Activated naive CD4-positive, alpha-beta T cell treated with anti-CD3 and anti-CD28 coated beads for 36 hours (primary cell): ENCODE measurements at regions of chr17 and their contacts with region 1.

Region 1: DNA sequence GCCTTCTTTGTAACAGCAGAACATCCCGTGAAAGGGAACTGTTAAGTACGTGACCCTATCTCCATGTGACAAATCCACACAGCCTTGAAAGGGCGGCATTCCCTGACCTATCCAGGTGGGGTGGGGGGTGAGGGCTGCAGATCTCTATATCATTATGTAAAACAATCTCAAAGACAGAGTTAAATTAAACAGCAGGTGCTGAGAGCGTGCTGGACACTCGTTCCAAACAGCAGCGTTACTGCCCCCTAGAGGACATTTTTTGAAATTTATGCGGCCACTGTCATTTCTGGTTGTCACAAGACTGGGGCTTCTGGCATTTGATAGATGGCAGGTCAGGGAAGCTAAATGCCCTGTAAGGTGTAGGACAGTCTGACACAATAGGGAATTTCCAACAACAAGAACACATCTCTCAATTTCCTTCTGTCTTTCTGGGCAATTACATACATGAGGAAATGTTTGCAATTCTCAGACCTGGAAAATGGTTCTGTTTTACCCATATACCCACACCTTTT is 6.7 kb upstream of the SLC25A39 start:
- DNase-seq: peak; percentile 87
- H3K4me3 Mint-ChIP-seq: no peak overlapping the region
- H3K27ac Mint-ChIP-seq: no peak overlapping the region
- H3K4me1 Mint-ChIP-seq: peaks cover 14% of the 10 kb centered on the region
- H3K27me3 Mint-ChIP-seq: no peaks in the 10 kb centered on the region

Region 2: GRCh38 chr17:44199553-44200477 is 131.5 kb before region 1 on chr17 and contains the start of gene ATXN7L3:
- CTCF ChIA-PET with region 1: interaction called, 10 read pairs
- intact Hi-C with region 1: loop called (anchors 1 kb)
- DNase-seq: peak; percentile 100
- H3K4me3 Mint-ChIP-seq: peak within 1 kb of the TSS; percentile 86
- H3K27ac Mint-ChIP-seq: peak within 1 kb of the TSS; percentile 91
- H3K4me1 Mint-ChIP-seq: peaks cover 36% of the 10 kb centered on the region
- H3K27me3 Mint-ChIP-seq: no peaks in the 10 kb centered on the region
- total RNA-seq, gene ATXN7L3: 53.3 to 53.9 TPM

Region 3: DNA sequence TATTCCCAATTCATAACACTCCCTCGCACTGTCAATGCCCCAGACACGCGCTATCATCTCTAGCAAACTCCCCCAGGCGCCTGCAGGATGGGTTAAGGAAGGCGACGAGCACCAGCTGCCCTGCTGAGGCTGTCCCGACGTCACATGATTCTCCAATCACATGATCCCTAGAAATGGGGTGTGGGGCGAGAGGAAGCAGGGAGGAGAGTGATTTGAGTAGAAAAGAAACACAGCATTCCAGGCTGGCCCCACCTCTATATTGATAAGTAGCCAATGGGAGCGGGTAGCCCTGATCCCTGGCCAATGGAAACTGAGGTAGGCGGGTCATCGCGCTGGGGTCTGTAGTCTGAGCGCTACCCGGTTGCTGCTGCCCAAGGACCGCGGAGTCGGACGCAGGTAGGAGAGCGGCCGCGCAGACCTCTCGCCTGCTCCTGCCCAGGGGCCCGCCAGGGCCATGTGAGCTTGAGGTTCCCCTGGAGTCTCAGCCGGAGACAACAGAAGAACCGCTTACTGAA is 13.7 kb after region 1 on chr17 and contains the start of gene GRN:
- CTCF ChIA-PET with region 1: interaction called, 10 read pairs
- intact Hi-C with region 1: loop called (anchors 1 kb)
- DNase-seq: peak; percentile 93
- H3K4me3 Mint-ChIP-seq: peak within 1 kb of the TSS; percentile 73
- H3K27ac Mint-ChIP-seq: peak within 1 kb of the TSS; percentile 43
- H3K4me1 Mint-ChIP-seq: peaks cover 10% of the 10 kb centered on the region
- H3K27me3 Mint-ChIP-seq: no peaks in the 10 kb centered on the region
- total RNA-seq, gene GRN: 47.1 to 50.5 TPM

Region 4: DNA sequence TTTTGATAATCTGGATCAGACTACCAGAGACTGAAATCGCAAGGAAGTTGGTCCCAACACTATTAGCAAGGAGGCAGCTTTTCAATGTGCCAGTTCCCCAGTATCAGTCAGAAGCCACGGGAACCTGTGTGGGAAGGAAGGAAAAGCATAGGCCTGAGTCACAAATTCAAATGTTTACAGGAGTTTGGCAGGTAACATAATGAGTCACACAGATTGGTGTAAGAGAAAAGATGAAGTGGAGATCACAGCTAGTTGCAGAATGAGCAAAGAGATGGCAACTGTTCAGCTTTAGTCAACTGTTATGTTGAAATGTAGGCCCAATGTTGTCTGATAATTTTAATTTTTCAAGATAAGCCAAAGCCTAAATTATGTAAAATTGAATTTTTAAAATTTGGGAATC is 86.2 kb after region 1 on chr17:
- CTCF ChIA-PET with region 1: no interaction called
- intact Hi-C with region 1: no loop called
- DNase-seq: peak; percentile 47
- H3K4me3 Mint-ChIP-seq: no peak overlapping the region
- H3K27ac Mint-ChIP-seq: peak overlapping the region; percentile 27
- H3K4me1 Mint-ChIP-seq: peaks cover 11% of the 10 kb centered on the region
- H3K27me3 Mint-ChIP-seq: no peaks in the 10 kb centered on the region

Region 5: DNA sequence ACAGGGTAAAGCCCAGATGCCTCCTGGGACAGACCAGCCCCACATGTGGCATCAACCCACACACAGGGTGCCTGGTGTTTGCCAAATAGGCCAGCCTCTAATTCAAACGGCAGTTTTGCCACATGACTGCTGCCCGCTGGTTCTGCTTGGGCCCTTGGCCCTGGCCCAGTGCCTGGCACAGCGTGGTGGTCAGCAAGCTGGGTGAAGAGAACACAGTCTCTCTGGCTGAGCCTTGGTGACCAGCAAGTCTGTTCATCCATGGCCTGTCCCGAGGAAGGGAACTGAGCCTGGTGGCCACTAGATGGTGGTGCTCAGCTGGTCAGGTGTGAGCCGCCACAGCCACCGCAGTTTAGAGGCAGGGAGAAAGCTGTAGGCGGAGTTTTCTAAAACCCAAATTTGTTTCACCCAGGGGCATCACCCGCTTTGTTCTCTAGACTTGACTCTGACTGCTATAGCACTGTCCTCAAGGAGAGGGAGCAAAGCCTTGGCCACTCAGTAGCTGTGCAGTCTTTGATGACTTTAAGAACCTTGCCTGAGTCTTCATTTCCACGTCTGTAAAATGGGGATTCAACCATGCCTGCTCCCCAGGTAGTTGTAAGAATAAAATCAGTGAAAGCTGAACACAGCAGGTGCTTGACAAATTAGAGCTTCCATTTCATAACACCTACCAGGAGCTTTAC is 588.7 kb after region 1 on chr17:
- CTCF ChIA-PET with region 1: no interaction called
- intact Hi-C with region 1: no loop called
- DNase-seq: peak; percentile 84
- H3K4me3 Mint-ChIP-seq: no peak overlapping the region
- H3K27ac Mint-ChIP-seq: no peak overlapping the region
- H3K4me1 Mint-ChIP-seq: no peaks in the 10 kb centered on the region
- H3K27me3 Mint-ChIP-seq: peaks cover 18% of the 10 kb centered on the region